IMR-90 (cell line): ENCODE measurements at regions of chr9 and their contacts with region 1.

Region 1: DNA sequence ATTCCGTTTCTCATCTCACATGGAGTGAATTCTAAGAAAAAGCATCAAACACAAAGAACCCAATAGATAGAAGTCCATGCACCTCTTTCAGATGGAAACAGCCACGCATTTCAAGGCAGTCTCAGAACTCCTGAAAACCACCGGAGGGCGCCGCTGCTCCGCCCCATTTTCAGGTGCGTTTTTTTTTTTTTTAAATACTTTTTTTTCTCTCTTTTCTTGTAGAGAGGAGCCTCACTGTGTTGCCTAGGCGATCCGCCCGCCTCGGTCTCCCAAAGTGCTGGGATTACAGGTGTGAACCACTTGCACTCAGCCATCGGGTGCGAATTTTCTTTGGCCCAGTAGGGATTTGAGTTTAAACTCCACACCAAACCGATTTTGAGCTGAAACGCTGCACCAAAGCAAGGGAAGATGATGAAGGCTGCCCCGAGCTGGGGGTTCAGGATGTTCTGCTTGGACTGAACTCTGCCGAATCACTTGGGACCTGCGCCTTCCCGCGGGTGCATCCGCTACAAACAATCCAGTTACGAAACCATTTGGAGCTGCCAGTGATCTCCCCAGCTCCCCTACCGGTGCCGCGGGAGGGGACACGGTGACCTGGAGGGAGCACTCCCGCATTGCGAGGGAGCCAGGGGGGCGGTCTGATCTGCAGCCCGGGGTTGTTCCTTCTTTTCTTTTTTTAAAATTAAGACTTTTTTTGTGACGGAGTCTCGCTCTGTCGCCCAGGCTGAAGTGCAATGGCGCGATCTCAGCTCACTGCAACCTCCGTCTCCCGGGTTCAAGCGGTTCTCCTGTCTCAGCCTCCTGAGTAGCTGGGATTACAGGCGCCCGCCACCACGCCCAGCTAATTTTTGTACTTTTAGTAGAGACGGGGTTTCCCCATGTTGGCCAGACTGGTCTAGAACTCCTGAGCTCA is 1.4 kb downstream of the PTGR1 start:
- DNase-seq: peak; percentile 64
- ATAC-seq: peak; percentile 24
- H3K4me3 ChIP-seq: peak overlapping the region; percentile 57
- H3K27ac ChIP-seq: peak overlapping the region; percentile 61
- H3K4me1 ChIP-seq: 0 out of 2 replicates have a peak, but pooled peaks cover 2% of the 10 kb centered on the region
- H3K27me3 ChIP-seq: no peaks in the 10 kb centered on the region
- CTCF ChIP-seq: peak; percentile 75
- POLR2A ChIP-seq: no peak; the same call in 1 of the 2 replicates
- RAD21 ChIP-seq: peak; percentile 78

Region 2: GRCh38 chr9:111621895-111622480 is 23.9 kb after region 1 on chr9:
- CTCF ChIA-PET with region 1: interaction called, 5 read pairs
- POLR2A ChIA-PET with region 1: interaction called, 3 read pairs
- dilution Hi-C with region 1: no loop called
- in situ Hi-C with region 1: no loop called
- intact Hi-C with region 1: loop called (anchors 1 kb)
- DNase-seq: peak; percentile 64
- ATAC-seq: peak; percentile 98
- H3K4me3 ChIP-seq: no peak overlapping the region
- H3K27ac ChIP-seq: no peak overlapping the region
- H3K4me1 ChIP-seq: peaks cover 2% of the 10 kb centered on the region; the same call in 1 of the 2 replicates
- H3K27me3 ChIP-seq: no peaks in the 10 kb centered on the region
- CTCF ChIP-seq: peak; percentile 85
- POLR2A ChIP-seq: no peak
- RAD21 ChIP-seq: peak; percentile 77

Region 3: DNA sequence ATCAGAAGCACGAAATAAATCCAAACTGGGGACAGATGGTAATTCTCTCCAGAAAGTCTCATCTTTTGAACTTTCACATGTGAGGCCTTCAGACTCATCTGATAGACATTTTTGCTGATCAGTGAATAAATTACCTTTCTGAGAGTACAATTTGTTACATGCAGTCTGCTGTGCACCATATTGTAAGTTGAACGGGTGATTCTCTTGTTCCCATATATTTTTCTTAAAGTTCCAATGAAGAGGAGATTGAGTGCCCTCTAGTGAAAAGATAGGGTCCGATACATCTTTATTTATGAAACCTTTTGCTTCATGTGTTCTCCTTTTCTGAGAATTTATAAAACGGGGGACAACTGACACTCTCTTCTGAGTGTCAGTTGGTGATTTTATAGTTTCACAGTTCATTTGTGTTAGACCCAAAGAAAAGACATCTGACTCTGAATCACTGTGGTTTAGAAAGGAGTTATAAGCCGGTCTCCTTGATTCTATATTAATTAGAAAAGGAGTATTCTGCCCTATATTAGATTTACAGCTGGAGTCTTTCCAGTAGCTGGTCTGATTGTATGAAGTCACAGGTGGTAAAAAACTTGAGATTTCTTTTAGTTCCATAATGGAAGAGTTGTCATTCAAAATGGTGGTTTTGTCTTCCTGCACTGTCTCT is 93.7 kb after region 1 on chr9:
- CTCF ChIA-PET with region 1: interaction called, 3 read pairs
- POLR2A ChIA-PET with region 1: no interaction called
- dilution Hi-C with region 1: no loop called
- in situ Hi-C with region 1: no loop called
- intact Hi-C with region 1: loop called (anchors 1 kb)
- DNase-seq: peak; percentile 48
- ATAC-seq: peak; percentile 75
- H3K4me3 ChIP-seq: no peak overlapping the region
- H3K27ac ChIP-seq: no peak overlapping the region
- H3K4me1 ChIP-seq: 0 out of 2 replicates have a peak, but pooled peaks cover 2% of the 10 kb centered on the region
- H3K27me3 ChIP-seq: no peaks in the 10 kb centered on the region
- CTCF ChIP-seq: peak; percentile 51
- POLR2A ChIP-seq: no peak
- RAD21 ChIP-seq: peak; percentile 47